Endothelial cell of umbilical vein (primary cell): ENCODE measurements at regions of chr3 and their contacts with region 1.

Region 1: DNA sequence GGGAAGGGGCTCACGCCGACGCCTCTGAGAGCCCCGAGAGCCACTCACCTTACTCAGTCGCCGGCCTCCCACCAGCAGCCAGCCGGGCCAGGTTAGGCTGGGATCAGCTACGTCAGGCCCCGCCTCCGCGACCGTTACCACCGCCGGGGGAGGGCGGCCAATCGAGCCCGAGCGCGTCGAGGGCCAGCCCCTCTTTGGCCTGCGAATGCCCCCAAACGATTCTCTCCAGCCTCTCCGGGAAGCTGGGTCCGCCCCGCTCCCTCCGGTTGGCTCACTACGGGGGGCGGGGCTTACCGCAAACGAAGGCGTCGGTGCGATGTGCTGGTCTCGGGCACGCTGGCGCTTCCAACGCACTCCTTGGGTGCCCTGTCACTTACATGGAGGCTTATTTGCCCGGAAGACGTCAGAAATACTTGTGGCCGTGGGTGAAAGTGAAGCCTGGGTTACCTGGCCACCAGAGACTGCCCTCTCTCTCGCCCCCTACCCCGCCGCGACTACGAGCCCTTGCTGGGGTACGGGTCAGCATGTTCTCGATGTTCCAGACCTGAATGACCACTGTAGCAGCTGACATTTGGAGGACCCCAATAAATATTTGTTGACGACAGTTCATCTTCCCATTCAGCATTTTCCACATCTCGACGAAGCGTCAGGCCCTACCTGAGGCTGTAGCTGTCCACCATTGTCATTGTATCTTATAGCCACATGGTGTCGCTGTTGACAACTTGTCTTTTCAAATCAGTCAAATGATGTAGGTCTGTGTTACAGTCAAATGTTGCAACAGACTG is at the start of gene CEP70:
- DNase-seq: peak; percentile 96
- H3K4me3 ChIP-seq: peak within 1 kb of the TSS; percentile 56 to 92 (median 63)
- H3K27ac ChIP-seq: peak within 1 kb of the TSS; percentile 46
- H3K4me1 ChIP-seq: no peaks in the 10 kb centered on the region
- H3K27me3 ChIP-seq: no peaks in the 10 kb centered on the region
- CTCF ChIP-seq: peak; percentile 72 to 84
- POLR2A ChIP-seq: peak; percentile 69
- total RNA-seq, gene CEP70: 14.7 and 16.9 TPM in 2 replicates

Region 2: DNA sequence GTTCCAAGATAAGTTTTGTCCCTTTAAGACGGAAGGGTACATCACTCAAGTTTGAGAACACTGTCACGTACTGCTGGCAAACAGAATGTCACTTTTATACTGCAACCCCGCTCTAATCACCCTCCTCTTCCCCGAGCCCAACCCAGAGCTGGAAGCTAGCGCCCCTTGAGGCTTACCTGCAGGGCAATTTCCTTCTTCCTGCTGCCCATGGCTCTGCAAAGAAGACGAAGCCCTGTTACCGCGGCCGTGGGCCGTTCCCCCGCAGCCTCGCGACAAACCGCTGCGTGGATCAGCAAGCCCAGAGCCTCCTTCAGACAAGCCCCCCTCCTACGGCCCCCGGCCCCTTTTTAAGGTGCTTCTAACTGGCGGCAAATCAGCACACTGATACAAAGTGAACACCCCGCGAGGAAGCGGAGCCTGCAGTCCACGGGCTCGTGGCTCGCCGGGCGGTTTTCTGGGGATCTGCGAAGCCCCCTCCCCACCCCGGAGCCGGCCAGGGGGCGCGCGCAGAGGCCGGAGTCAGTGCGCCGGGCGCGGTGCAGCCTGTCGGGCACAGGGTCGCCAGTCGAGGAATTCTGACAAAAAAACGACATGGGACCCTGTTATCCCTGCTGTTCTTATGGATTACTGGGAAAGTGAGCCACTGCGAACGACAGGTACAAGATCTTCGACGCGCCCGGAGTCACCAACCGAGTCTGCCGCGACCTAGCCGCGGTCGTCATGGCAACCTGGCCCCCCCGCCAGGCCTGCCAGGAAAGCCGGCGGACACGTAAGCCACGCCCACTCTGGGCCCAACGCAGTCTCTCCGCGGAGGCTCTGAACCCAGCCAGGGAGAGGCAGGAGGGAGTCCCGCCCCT is 265.0 kb before region 1 on chr3 and contains the start of gene NME9:
- CTCF ChIA-PET with region 1: no interaction called
- POLR2A ChIA-PET with region 1: no interaction called
- dilution Hi-C with region 1: no loop called
- intact Hi-C with region 1: loop called (anchors 10 kb)
- DNase-seq: peak; percentile 88
- H3K4me3 ChIP-seq: peak within 1 kb of the TSS; percentile 32 to 53 (median 52)
- H3K27ac ChIP-seq: no peak within 1 kb of the TSS
- H3K4me1 ChIP-seq: peaks cover 20% of the 10 kb centered on the region
- H3K27me3 ChIP-seq: peaks cover 2 to 3% of the 10 kb centered on the region in 2 experiments
- CTCF ChIP-seq: peak; percentile 54 to 69
- POLR2A ChIP-seq: no peak
- total RNA-seq, gene NME9: not detected in 2 replicates

Region 3: DNA sequence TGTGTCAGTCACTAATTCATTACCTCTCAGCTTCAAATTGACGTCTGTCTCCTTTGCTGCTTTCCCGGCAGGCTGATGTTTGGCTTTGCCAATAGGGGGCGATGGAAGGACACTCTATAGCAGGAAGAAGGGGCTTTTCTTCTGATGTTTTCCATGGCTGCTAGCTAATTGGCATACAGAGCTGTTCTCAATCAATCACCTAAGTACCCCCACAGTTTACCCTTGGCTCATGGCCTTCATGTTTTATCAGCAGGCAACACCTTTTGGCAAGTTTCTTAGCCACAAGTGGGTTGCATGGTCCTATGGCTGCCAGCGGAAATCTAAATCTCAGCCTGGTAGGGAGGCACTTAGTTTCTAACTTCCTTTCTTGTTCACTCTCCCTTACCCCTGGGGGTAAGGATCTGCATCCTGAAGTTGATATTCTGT is 114.9 kb before region 1 on chr3:
- CTCF ChIA-PET with region 1: interaction called, 17 read pairs
- POLR2A ChIA-PET with region 1: no interaction called
- dilution Hi-C with region 1: no loop called
- intact Hi-C with region 1: loop called (anchors 1 kb)
- DNase-seq: peak; percentile 55
- H3K4me3 ChIP-seq: no peak overlapping the region
- H3K27ac ChIP-seq: no peak overlapping the region
- H3K4me1 ChIP-seq: no peaks in the 10 kb centered on the region
- H3K27me3 ChIP-seq: no peaks in the 10 kb centered on the region
- CTCF ChIP-seq: peak; percentile 79 to 87
- POLR2A ChIP-seq: no peak

Region 4: GRCh38 chr3:138694287-138695007 is 100.1 kb after region 1 on chr3:
- CTCF ChIA-PET with region 1: interaction called, 10 read pairs
- POLR2A ChIA-PET with region 1: no interaction called
- dilution Hi-C with region 1: no loop called
- intact Hi-C with region 1: loop called (anchors 5 kb)
- DNase-seq: peak; percentile 58
- H3K4me3 ChIP-seq: no peak overlapping the region
- H3K27ac ChIP-seq: no peak overlapping the region
- H3K4me1 ChIP-seq: no peaks in the 10 kb centered on the region
- H3K27me3 ChIP-seq: no peaks in the 10 kb centered on the region
- CTCF ChIP-seq: no peak
- POLR2A ChIP-seq: no peak

Region 5: DNA sequence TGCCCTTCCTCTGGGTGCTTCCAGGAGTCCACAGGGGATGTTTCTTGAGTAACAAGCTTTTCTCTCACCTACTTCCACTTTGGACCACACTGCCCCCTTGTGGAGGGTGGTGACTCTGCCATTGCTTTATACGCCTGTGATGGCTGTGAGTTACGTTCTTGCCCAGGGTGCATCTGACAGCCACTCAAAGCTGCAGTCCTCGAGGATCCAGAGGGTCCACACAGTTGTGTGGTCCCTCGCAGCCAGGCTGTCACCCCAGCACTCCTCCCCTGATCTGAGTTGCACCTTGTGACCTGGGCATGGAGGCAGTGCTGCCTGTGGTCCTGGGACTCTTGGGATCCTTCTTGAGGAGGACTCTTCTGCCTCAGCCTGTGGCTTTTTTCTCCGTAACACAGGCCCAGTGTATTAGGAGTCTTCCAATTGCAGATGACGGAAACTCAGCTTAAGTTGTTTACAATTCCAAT is 329.2 kb after region 1 on chr3:
- CTCF ChIA-PET with region 1: interaction called, 173 read pairs
- POLR2A ChIA-PET with region 1: interaction called, 3 read pairs
- dilution Hi-C with region 1: no loop called
- intact Hi-C with region 1: loop called (anchors 1 kb)
- DNase-seq: peak; percentile 85
- H3K4me3 ChIP-seq: no peak overlapping the region
- H3K27ac ChIP-seq: no peak overlapping the region
- H3K4me1 ChIP-seq: peaks cover 7% of the 10 kb centered on the region
- H3K27me3 ChIP-seq: peaks cover 2% of the 10 kb centered on the region in 2 experiments
- CTCF ChIP-seq: peak; percentile 86
- POLR2A ChIP-seq: no peak

Region 6: GRCh38 chr3:138974462-138974861 is 380.1 kb after region 1 on chr3:
- CTCF ChIA-PET with region 1: interaction called, 20 read pairs
- POLR2A ChIA-PET with region 1: no interaction called
- dilution Hi-C with region 1: no loop called
- intact Hi-C with region 1: no loop called
- DNase-seq: peak; percentile 16
- H3K4me3 ChIP-seq: no peak overlapping the region
- H3K27ac ChIP-seq: no peak overlapping the region
- H3K4me1 ChIP-seq: no peaks in the 10 kb centered on the region
- H3K27me3 ChIP-seq: peaks cover 0 to 2% of the 10 kb centered on the region in 2 experiments
- CTCF ChIP-seq: no peak
- POLR2A ChIP-seq: no peak